Right ventricle myocardium superior (tissue), 1 donor: ENCODE measurements at regions of chr12 and their contacts with region 1.

Region 1: GRCh38 chr12:122054842-122055520 is 23.6 kb upstream of the MLXIP start:
- DNase-seq: no peak
- ATAC-seq: no peak

Region 2: GRCh38 chr12:122123051-122123760 is 68.2 kb after region 1 on chr12:
- intact Hi-C with region 1: loop called (anchors 1 kb)
- DNase-seq: no peak
- ATAC-seq: peak; percentile 67